ENCODE measurements at regions of chr9 and their contacts with region 1.

Region 1: DNA sequence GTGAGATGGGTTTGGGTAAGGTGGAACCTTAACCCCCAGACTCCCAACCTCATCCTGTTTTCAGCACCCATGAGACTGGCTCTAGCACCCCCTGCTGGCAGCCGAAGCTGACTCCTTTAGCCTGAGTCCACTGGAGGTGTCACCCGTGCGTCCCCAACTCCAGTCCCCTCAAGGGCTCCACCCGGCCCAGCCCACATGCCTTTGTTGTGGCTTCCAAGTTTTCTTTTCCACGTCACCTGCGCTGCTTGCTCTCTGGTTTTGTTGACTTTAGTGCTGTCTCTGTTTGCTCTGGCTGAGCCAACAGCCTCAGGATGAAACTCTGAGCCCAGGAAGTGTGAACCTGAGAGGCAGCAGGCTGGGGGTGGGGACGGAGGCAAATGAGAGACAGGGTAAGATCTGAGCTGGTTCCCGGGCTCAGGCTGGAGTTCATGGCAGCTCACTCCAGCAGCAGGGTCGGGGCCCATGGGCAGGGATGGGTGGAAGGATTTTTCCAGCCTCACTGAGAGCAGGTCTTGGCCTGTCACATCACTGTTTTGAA is 13.2 kb upstream of the AQP7 start:
- DNase-seq: peak; percentile 97
- ATAC-seq: peak; percentile 92
- H3K4me3 Mint-ChIP-seq: peak overlapping the region; percentile 25
- H3K27ac Mint-ChIP-seq: peak overlapping the region; percentile 91
- H3K4me1 Mint-ChIP-seq: peaks cover 41% of the 10 kb centered on the region
- H3K27me3 Mint-ChIP-seq: no peaks in the 10 kb centered on the region
- CTCF ChIP-seq: peak; percentile 79

Region 2: DNA sequence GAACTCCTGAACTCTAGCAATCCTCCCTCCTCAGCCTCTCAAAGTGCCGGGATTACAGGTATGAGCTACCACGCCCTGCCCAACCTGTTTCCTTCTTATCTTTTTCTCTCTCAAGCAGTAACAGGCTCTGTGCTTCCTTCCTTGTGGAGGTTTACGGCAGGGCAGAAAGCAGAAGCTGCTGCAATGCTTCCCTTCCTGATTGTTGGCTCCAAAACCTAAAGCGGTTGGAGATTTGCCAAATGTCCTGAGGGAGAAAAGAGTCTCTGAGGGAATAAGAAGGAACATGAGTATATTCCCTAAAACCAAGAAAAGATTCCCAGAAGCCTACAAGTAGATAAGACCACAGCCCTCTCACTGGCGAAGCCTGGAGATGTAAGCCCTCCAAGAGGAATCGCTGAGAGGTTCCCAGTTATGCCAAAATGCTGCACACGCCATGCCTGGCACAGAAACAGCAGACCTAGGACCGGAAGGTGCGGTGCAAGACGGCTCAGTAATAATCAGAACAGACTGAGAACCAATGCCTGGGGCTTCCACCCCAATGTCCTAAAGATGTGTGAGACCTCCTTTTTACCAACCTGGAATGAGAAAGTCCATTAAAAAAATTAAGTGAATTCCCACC is 487.3 kb before region 1 on chr9:
- CTCF ChIA-PET with region 1: no interaction called
- POLR2A ChIA-PET with region 1: no interaction called
- intact Hi-C with region 1: no loop called
- DNase-seq: no peak
- ATAC-seq: no peak
- H3K4me3 Mint-ChIP-seq: no peak overlapping the region
- H3K27ac Mint-ChIP-seq: no peak overlapping the region
- H3K4me1 Mint-ChIP-seq: no peaks in the 10 kb centered on the region
- H3K27me3 Mint-ChIP-seq: peaks cover 6% of the 10 kb centered on the region
- CTCF ChIP-seq: no peak

Region 3: GRCh38 chr9:33374634-33375213 is 40.8 kb before region 1 on chr9:
- CTCF ChIA-PET with region 1: interaction called, 51 read pairs
- POLR2A ChIA-PET with region 1: interaction called, 3 read pairs
- intact Hi-C with region 1: no loop called
- DNase-seq: peak; percentile 84
- ATAC-seq: peak; percentile 97
- H3K4me3 Mint-ChIP-seq: no peak overlapping the region
- H3K27ac Mint-ChIP-seq: no peak overlapping the region
- H3K4me1 Mint-ChIP-seq: peaks cover 4% of the 10 kb centered on the region
- H3K27me3 Mint-ChIP-seq: no peaks in the 10 kb centered on the region
- CTCF ChIP-seq: peak; percentile 92

Region 4: GRCh38 chr9:33388110-33388994 is 27.2 kb before region 1 on chr9:
- CTCF ChIA-PET with region 1: no interaction called
- POLR2A ChIA-PET with region 1: no interaction called
- intact Hi-C with region 1: no loop called
- DNase-seq: no peak
- ATAC-seq: no peak
- H3K4me3 Mint-ChIP-seq: no peak overlapping the region
- H3K27ac Mint-ChIP-seq: no peak overlapping the region
- H3K4me1 Mint-ChIP-seq: no peaks in the 10 kb centered on the region
- H3K27me3 Mint-ChIP-seq: peaks cover 3% of the 10 kb centered on the region
- CTCF ChIP-seq: no peak

Region 5: GRCh38 chr9:33404788-33405362 is 10.7 kb before region 1 on chr9:
- CTCF ChIA-PET with region 1: interaction called, 43 read pairs
- POLR2A ChIA-PET with region 1: no interaction called
- intact Hi-C with region 1: no loop called
- DNase-seq: no peak
- ATAC-seq: no peak
- H3K4me3 Mint-ChIP-seq: no peak overlapping the region
- H3K27ac Mint-ChIP-seq: no peak overlapping the region
- H3K4me1 Mint-ChIP-seq: no peaks in the 10 kb centered on the region
- H3K27me3 Mint-ChIP-seq: no peaks in the 10 kb centered on the region
- CTCF ChIP-seq: no peak

Region 6: GRCh38 chr9:33446946-33447798 is 31.6 kb after region 1 on chr9 and contains the start of gene AQP3:
- CTCF ChIA-PET with region 1: interaction called, 36 read pairs
- POLR2A ChIA-PET with region 1: interaction called, 11 read pairs
- intact Hi-C with region 1: loop called (anchors 5 kb)
- DNase-seq: peak; percentile 76
- ATAC-seq: peak; percentile 68
- H3K4me3 Mint-ChIP-seq: peak within 1 kb of the TSS; percentile 66
- H3K27ac Mint-ChIP-seq: peak within 1 kb of the TSS; percentile 88
- H3K4me1 Mint-ChIP-seq: peaks cover 39% of the 10 kb centered on the region
- H3K27me3 Mint-ChIP-seq: no peaks in the 10 kb centered on the region
- CTCF ChIP-seq: peak; percentile 39
- total RNA-seq, gene AQP3: 1.2 to 2.6 TPM

Region 7: GRCh38 chr9:33458444-33458843 is 42.9 kb after region 1 on chr9:
- CTCF ChIA-PET with region 1: interaction called, 36 read pairs
- POLR2A ChIA-PET with region 1: interaction called, 5 read pairs
- intact Hi-C with region 1: loop called (anchors 5 kb)
- DNase-seq: peak; percentile 85
- ATAC-seq: peak; percentile 87
- H3K4me3 Mint-ChIP-seq: peak overlapping the region; percentile 8
- H3K27ac Mint-ChIP-seq: peak overlapping the region; percentile 90
- H3K4me1 Mint-ChIP-seq: peaks cover 53% of the 10 kb centered on the region
- H3K27me3 Mint-ChIP-seq: no peaks in the 10 kb centered on the region
- CTCF ChIP-seq: no peak

Region 8: DNA sequence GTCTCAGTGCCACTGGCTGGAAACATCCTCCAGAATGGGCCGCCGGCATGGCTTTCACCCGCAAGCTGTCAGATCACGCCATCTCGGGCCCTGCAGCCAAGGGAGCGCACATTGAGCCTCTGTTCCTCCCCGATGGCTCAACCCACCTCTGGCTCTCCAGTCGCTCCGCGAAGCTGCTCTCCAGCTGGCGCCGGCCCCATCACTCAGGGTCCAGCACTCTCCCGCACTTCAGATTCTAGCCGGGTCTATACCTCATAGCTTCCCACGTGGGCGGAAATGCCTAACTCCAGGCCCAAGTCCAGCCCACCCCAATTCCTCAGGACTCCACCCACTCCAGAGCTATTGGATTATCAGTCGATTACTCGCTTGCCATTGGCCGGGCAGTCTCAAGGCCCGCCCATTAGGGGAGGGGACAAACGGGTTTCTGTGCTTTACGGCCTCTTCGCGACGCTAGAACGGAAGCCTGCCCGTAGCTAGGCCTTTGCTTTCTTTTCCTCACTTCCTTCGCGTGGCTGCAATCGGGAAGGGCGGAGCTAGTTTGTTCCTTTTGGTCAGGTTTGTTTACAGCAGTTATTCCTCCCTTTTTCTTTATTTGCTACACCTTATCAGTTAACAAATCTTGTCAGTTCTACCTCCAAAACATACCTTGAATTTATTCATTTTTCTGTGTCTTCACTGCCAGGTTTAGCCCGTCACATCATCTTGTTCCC is 58.2 kb after region 1 on chr9 and contains the start of gene NOL6:
- CTCF ChIA-PET with region 1: interaction called, 34 read pairs
- POLR2A ChIA-PET with region 1: interaction called, 4 read pairs
- intact Hi-C with region 1: no loop called
- DNase-seq: peak; percentile 99
- ATAC-seq: peak; percentile 100
- H3K4me3 Mint-ChIP-seq: peak within 1 kb of the TSS; percentile 89
- H3K27ac Mint-ChIP-seq: peak within 1 kb of the TSS; percentile 94
- H3K4me1 Mint-ChIP-seq: peaks cover 23% of the 10 kb centered on the region
- H3K27me3 Mint-ChIP-seq: no peaks in the 10 kb centered on the region
- CTCF ChIP-seq: no peak
- total RNA-seq, gene NOL6: 45.5 to 45.9 TPM

Region 9: GRCh38 chr9:33638391-33638915 is 222.9 kb after region 1 on chr9:
- CTCF ChIA-PET with region 1: no interaction called
- POLR2A ChIA-PET with region 1: no interaction called
- intact Hi-C with region 1: no loop called
- DNase-seq: no peak
- ATAC-seq: no peak
- H3K4me3 Mint-ChIP-seq: no peak overlapping the region
- H3K27ac Mint-ChIP-seq: no peak overlapping the region
- H3K4me1 Mint-ChIP-seq: no peaks in the 10 kb centered on the region
- H3K27me3 Mint-ChIP-seq: peaks cover 49% of the 10 kb centered on the region
- CTCF ChIP-seq: no peak